ENCODE measurements at regions of chr4 and their contacts with region 1.

Region 1: DNA sequence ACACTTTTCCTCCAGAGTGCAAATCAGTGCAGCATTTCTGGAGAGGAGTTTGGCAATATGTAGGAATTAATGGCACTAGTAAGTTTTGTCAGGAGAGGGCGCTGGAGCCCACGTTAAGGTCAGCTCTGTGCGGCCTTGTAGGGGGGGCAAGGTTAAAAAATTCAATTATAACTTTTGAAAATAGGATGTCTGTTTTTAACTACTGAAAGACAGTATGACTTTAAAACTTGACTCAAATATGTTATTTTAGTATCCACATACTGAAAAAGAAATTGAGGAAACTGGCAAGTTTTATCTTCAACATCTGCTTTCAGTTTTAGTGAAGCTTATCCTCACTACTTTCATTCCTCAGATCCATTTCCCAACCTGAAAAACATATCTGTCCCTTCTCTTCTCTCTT is 30.9 kb upstream of the HSD17B13 start:
- DNase-seq: peak; percentile 13
- ATAC-seq: peak; percentile 83
- H3K4me3 ChIP-seq: no peak overlapping the region
- H3K27ac ChIP-seq: no peak overlapping the region
- H3K4me1 ChIP-seq: peaks cover 9% of the 10 kb centered on the region
- H3K27me3 ChIP-seq: no peaks in the 10 kb centered on the region
- CTCF ChIP-seq: peak; percentile 51 to 74 (median 66); a peak in 5 of 6 replicates
- EP300 ChIP-seq: no peak
- POLR2A ChIP-seq: no peak
- RAD21 ChIP-seq: peak; percentile 84

Region 2: GRCh38 chr4:87339440-87339839 is 14.2 kb before region 1 on chr4:
- CTCF ChIA-PET with region 1: interaction called, 10 read pairs
- POLR2A ChIA-PET with region 1: no interaction called
- RAD21 ChIA-PET with region 1: interaction called, 3 read pairs
- SMC1A ChIA-PET with region 1: interaction called, 7 read pairs
- in situ Hi-C with region 1: no loop called
- intact Hi-C with region 1: no loop called
- DNase-seq: no peak
- ATAC-seq: no peak
- H3K4me3 ChIP-seq: no peak overlapping the region
- H3K27ac ChIP-seq: no peak overlapping the region
- H3K4me1 ChIP-seq: no peaks in the 10 kb centered on the region
- H3K27me3 ChIP-seq: no peaks in the 10 kb centered on the region
- CTCF ChIP-seq: no peak
- EP300 ChIP-seq: no peak
- POLR2A ChIP-seq: no peak
- RAD21 ChIP-seq: no peak